Colonic mucosa (tissue), 4 donors: ENCODE measurements at regions of chr9 and their contacts with region 1.

Region 1: DNA sequence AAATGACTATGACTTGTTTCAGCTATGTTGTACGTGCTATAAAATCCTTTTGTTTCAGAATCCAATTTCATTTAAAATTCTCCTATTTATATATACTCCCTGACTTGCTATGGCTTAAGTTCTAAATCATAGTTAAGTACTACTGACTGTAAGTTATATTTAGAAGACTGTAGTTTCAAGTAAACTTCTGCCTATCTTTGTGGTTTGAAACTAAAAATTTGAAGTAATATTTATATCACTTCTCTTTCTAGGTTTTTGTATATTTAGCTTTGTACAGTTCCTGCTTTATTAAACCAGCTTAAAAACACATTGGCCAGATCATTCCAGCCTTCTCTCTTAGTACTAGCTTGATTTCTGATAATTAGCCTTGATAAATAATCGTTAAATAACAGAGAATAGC is 196.3 kb downstream of the MLLT3 start:
- DNase-seq: no peak
- H3K4me3 ChIP-seq: no peak overlapping the region
- H3K27ac ChIP-seq: no peak overlapping the region
- H3K4me1 ChIP-seq: no peaks in the 10 kb centered on the region
- H3K27me3 ChIP-seq: no peaks in the 10 kb centered on the region
- CTCF ChIP-seq: no peak

Region 2: GRCh38 chr9:20693068-20693467 is 267.0 kb after region 1 on chr9:
- intact Hi-C with region 1: loop called (anchors 10 kb)
- DNase-seq: no peak
- H3K4me3 ChIP-seq: no peak overlapping the region
- H3K27ac ChIP-seq: no peak overlapping the region
- H3K4me1 ChIP-seq: no peaks in the 10 kb centered on the region
- H3K27me3 ChIP-seq: no peaks in the 10 kb centered on the region
- CTCF ChIP-seq: no peak